ENCODE measurements at regions of chr3 and their contacts with region 1.

Region 1: GRCh38 chr3:11379233-11379823 is 107.1 kb downstream of the ATG7 start:
- DNase-seq: peak in 10 of 42 donors; percentile 16 to 72 (median 42)

Region 2: DNA sequence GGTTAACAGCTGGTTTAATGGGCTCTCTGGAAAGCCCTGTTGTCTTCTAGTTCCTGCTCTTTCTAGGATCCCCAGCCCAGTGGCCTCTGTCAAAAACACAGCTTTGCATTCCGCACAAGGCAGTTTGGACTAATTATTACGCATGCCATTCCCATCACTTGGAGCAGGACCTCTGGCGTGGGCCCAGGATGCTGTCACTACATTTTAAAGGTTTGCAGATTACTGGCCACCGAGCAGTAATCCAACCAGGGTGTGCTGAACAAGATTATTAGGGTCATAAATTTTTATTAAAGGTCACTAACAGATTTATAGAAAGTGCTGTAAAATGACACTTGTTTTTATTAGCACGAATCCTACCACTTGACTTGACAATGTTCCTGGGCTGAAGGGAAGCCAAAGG is 706.9 kb before region 1 on chr3:
- intact Hi-C with region 1: no loop called
- DNase-seq: peak in 3 of 42 donors; percentile 9 to 37 (median 16)

Region 3: DNA sequence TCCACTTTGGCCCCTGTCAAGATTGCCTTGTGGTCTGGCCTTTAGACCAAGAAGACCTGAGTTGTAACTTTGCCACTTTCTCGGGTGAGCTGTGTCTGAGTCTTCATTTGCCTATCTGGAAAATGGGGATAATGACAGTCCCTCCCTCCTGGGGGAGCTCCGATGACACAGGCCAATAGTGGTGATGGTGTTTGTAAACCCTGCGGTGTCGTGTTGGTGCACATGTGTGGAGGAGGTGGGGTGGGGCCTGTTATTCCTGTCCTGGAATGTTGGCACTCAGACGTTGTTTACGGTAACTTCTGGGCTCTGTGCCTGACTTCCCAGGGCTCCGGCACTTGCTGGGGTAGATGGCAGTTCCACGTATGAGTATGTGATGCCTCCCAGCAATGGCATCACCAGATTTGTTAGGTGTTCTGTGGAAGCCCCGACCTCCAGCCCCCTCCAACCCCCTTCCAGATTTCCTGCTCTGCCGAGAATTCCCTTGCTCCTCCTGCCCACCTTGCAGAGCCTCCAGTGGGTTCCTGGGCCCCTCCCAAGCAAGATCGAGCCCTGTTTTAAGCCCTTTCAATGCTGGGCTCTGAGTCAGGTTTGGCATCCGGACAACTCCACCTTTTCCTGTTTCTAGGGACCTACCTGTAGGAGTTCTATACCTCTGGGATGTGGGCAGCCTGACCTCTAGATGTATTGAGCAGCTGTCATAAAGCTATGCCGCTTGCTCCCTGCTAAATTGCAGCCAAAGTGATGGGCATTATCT is 193.6 kb before region 1 on chr3:
- intact Hi-C with region 1: no loop called
- DNase-seq: no peak

Region 4: GRCh38 chr3:11651900-11652299 is 272.6 kb after region 1 on chr3:
- intact Hi-C with region 1: loop called (anchors 5 kb)
- DNase-seq: no peak

Region 5: DNA sequence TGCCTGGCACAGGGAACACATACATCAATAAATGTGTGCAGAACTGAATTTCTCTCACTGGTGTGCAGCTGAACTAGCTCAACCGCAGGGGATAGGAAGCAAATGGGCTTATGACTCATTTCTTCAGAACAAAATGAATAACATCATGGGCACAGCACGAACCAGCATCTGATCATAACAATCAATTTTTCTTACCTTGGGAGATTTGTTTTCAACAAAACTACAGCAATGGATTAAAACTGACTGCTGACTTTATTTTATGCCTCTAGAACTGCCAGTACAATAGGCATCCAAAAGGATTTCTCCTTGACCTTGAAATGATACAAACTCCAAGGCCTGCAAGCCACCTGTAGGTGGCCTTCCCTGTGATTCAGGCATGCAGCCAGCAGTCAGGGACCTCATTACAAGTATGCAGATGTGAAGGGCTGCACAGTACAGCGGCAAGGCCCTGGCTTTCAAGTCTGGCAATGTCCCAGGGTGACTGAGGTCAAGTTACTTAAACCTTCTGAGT is 441.3 kb after region 1 on chr3:
- intact Hi-C with region 1: loop called (anchors 10 kb)
- DNase-seq: peak in 18 of 42 donors; percentile 7 to 66 (median 28)

Measured in head of caudate nucleus (tissue), 42 donors.